CD4-positive, alpha-beta T cell (primary cell): ENCODE measurements at regions of chr21 and their contacts with region 1.

Region 1: DNA sequence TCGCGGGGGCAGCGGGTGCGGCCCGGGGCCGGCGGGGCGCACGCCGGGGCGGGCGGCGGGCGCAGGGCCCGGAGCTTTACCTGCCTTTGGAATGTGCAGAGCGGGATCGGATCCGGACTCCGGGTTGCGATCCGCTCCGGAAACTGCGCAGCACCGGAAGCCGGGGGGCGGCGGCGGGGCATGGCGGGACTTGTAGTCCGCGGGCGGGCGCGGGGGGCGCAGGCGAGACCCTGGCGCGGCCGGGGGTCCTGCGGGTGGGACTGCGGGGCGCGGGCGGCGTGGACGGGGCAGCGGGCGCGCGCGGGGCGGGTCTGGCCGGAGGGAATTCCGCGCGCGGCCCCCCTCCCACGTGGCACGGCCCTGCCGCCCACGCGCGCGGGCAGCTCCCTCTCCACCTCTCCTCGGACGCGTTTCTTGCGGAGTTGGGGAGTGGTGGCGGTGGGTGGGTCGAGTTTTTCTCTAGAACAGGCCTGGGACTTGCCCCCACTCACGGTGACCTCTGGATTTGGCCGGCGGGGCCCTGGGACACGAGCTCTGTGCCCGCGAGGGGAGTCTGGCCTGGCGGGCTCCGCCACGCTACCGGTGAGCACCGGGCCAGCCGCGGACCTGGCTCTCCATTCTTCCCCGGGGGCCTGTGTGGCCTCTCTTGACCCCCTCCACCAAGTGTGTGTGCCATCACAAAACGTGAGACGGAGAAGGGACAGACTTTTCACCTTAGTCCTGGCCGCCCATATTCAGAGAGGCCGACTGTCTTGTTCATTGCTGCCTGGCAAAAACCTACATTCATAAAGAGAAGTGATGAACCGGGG is at the start of gene PRDM15:
- DNase-seq: peak; percentile 62 to 86 (median 76)
- ATAC-seq: peak; percentile 71
- H3K4me3 ChIP-seq: peak within 1 kb of the TSS; percentile 73
- H3K4me3 Mint-ChIP-seq: peak within 1 kb of the TSS; percentile 97
- H3K27ac ChIP-seq: peak within 1 kb of the TSS; percentile 47 to 70
- H3K27ac Mint-ChIP-seq: peak within 1 kb of the TSS; percentile 93
- H3K4me1 ChIP-seq: peaks cover 32% of the 10 kb centered on the region
- H3K4me1 Mint-ChIP-seq: peaks cover 37% of the 10 kb centered on the region
- H3K27me3 ChIP-seq: no peaks in the 10 kb centered on the region
- H3K27me3 Mint-ChIP-seq: no peaks in the 10 kb centered on the region
- CTCF ChIP-seq: no peak
- total RNA-seq, gene PRDM15: 10.4 to 12.0 TPM

Region 2: GRCh38 chr21:41850085-41850484 is 29.3 kb before region 1 on chr21:
- CTCF ChIA-PET with region 1: no interaction called
- POLR2A ChIA-PET with region 1: no interaction called
- intact Hi-C with region 1: loop called in 1 of 2 experiments (anchors 1 kb)
- DNase-seq: no peak
- ATAC-seq: no peak
- H3K4me3 ChIP-seq: no peak overlapping the region
- H3K4me3 Mint-ChIP-seq: no peak overlapping the region
- H3K27ac ChIP-seq: no peak overlapping the region
- H3K27ac Mint-ChIP-seq: no peak overlapping the region
- H3K4me1 ChIP-seq: no peaks in the 10 kb centered on the region
- H3K4me1 Mint-ChIP-seq: no peaks in the 10 kb centered on the region
- H3K27me3 ChIP-seq: no peaks in the 10 kb centered on the region
- H3K27me3 Mint-ChIP-seq: no peaks in the 10 kb centered on the region
- CTCF ChIP-seq: no peak

Region 3: GRCh38 chr21:41895643-41896493 is 16.5 kb after region 1 on chr21:
- CTCF ChIA-PET with region 1: interaction called, 4 read pairs
- POLR2A ChIA-PET with region 1: interaction called, 17 read pairs
- intact Hi-C with region 1: no loop called
- DNase-seq: peak; percentile 33 to 85 (median 49)
- ATAC-seq: peak; percentile 96
- H3K4me3 ChIP-seq: no peak overlapping the region
- H3K4me3 Mint-ChIP-seq: peak overlapping the region; percentile 7
- H3K27ac ChIP-seq: no peak overlapping the region
- H3K27ac Mint-ChIP-seq: peak overlapping the region; percentile 16
- H3K4me1 ChIP-seq: peaks cover 26% of the 10 kb centered on the region
- H3K4me1 Mint-ChIP-seq: peaks cover 25% of the 10 kb centered on the region
- H3K27me3 ChIP-seq: no peaks in the 10 kb centered on the region
- H3K27me3 Mint-ChIP-seq: no peaks in the 10 kb centered on the region
- CTCF ChIP-seq: no peak

Region 4: DNA sequence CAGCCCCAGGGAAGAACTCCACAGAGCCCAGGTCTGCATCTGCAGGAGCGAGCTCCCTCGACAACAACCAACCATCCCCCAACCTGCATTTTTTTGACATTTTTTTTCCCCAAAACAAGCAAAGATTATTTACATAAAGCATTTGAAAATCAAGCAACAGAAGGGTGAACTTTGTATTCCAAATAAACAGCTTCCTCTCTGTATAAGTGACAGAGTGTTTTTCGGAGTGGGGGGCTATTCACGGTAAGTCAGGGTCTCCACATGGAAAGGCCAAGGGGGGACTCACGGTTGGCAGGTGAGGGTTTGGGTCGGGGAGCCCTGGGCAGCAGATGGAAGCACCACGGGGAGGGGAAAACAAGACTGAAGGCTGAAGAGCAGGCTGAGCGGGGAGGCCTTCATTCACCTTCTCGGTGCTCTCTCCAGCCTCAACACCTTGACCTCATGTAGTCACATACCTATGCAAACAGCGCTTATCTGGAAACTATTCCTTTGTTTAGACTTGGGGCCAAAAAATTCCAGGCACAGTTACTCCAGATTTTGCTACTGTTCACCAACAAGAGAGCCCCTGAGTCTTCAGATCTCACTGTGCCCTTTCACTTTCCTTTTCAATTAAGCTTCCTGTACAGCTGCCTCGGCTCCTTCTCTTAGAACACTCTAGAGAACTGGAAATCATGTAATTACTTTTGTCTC is 46.9 kb after region 1 on chr21:
- CTCF ChIA-PET with region 1: no interaction called
- POLR2A ChIA-PET with region 1: interaction called, 44 read pairs
- intact Hi-C with region 1: loop called (anchors 1 to 2 kb)
- DNase-seq: peak in 11 of 14 experiments; percentile 1 to 80 (median 22)
- ATAC-seq: peak; percentile 92
- H3K4me3 ChIP-seq: peak overlapping the region; percentile 67
- H3K4me3 Mint-ChIP-seq: peak overlapping the region; percentile 90
- H3K27ac ChIP-seq: peak overlapping the region; percentile 75 to 83
- H3K27ac Mint-ChIP-seq: peak overlapping the region; percentile 95
- H3K4me1 ChIP-seq: peaks cover 52% of the 10 kb centered on the region
- H3K4me1 Mint-ChIP-seq: peaks cover 55% of the 10 kb centered on the region
- H3K27me3 ChIP-seq: no peaks in the 10 kb centered on the region
- H3K27me3 Mint-ChIP-seq: no peaks in the 10 kb centered on the region
- CTCF ChIP-seq: no peak

Region 5: GRCh38 chr21:42009831-42010523 is 130.6 kb after region 1 on chr21 and contains the start of gene ZBTB21:
- CTCF ChIA-PET with region 1: no interaction called
- POLR2A ChIA-PET with region 1: interaction called, 6 read pairs
- intact Hi-C with region 1: loop called (anchors 2 to 10 kb)
- DNase-seq: peak; percentile 96 to 99 (median 98)
- ATAC-seq: peak; percentile 73
- H3K4me3 ChIP-seq: peak within 1 kb of the TSS; percentile 83
- H3K4me3 Mint-ChIP-seq: peak within 1 kb of the TSS; percentile 100
- H3K27ac ChIP-seq: peak within 1 kb of the TSS; percentile 91 to 100
- H3K27ac Mint-ChIP-seq: peak within 1 kb of the TSS; percentile 99
- H3K4me1 ChIP-seq: peaks cover 11% of the 10 kb centered on the region
- H3K4me1 Mint-ChIP-seq: peaks cover 34% of the 10 kb centered on the region
- H3K27me3 ChIP-seq: no peaks in the 10 kb centered on the region
- H3K27me3 Mint-ChIP-seq: no peaks in the 10 kb centered on the region
- CTCF ChIP-seq: no peak
- total RNA-seq, gene ZBTB21: 132 to 139 TPM

Region 6: GRCh38 chr21:42080788-42081083 is 201.3 kb after region 1 on chr21:
- CTCF ChIA-PET with region 1: no interaction called
- POLR2A ChIA-PET with region 1: no interaction called
- intact Hi-C with region 1: no loop called
- DNase-seq: peak in 2 of 14 experiments; percentile 48 to 59
- ATAC-seq: no peak
- H3K4me3 ChIP-seq: no peak overlapping the region
- H3K4me3 Mint-ChIP-seq: no peak overlapping the region
- H3K27ac ChIP-seq: no peak overlapping the region
- H3K27ac Mint-ChIP-seq: no peak overlapping the region
- H3K4me1 ChIP-seq: no peaks in the 10 kb centered on the region
- H3K4me1 Mint-ChIP-seq: no peaks in the 10 kb centered on the region
- H3K27me3 ChIP-seq: no peaks in the 10 kb centered on the region
- H3K27me3 Mint-ChIP-seq: no peaks in the 10 kb centered on the region
- CTCF ChIP-seq: no peak

Region 7: GRCh38 chr21:42117229-42117966 is 238.0 kb after region 1 on chr21:
- CTCF ChIA-PET with region 1: interaction called, 3 read pairs
- POLR2A ChIA-PET with region 1: interaction called, 4 read pairs
- intact Hi-C with region 1: loop called in 1 of 2 experiments (anchors 1 kb)
- DNase-seq: peak; percentile 55 to 86 (median 72)
- ATAC-seq: peak; percentile 92
- H3K4me3 ChIP-seq: no peak overlapping the region
- H3K4me3 Mint-ChIP-seq: no peak overlapping the region
- H3K27ac ChIP-seq: no peak overlapping the region
- H3K27ac Mint-ChIP-seq: no peak overlapping the region
- H3K4me1 ChIP-seq: peaks cover 20% of the 10 kb centered on the region
- H3K4me1 Mint-ChIP-seq: peaks cover 21% of the 10 kb centered on the region
- H3K27me3 ChIP-seq: peaks cover 39 to 47% of the 10 kb centered on the region in 2 experiments
- H3K27me3 Mint-ChIP-seq: peaks cover 57% of the 10 kb centered on the region
- CTCF ChIP-seq: peak; percentile 97